ENCODE measurements at regions of chr5 and their contacts with region 1.

Region 1: GRCh38 chr5:1315709-1316587 is 21.1 kb upstream of the TERT start:
- DNase-seq: peak in 8 of 9 experiments; percentile 34 to 83 (median 70)
- ATAC-seq: peak; percentile 65
- H3K4me3 ChIP-seq: peak overlapping the region; percentile 40 to 54
- H3K4me3 Mint-ChIP-seq: peak overlapping the region; percentile 82
- H3K27ac ChIP-seq: peak overlapping the region; percentile 45
- H3K27ac Mint-ChIP-seq: peak overlapping the region; percentile 94
- H3K4me1 ChIP-seq: peaks cover 58% of the 10 kb centered on the region
- H3K4me1 Mint-ChIP-seq: peaks cover 61% of the 10 kb centered on the region
- H3K27me3 ChIP-seq: no peaks in the 10 kb centered on the region
- H3K27me3 Mint-ChIP-seq: no peaks in the 10 kb centered on the region
- CTCF ChIP-seq: no peak

Region 2: DNA sequence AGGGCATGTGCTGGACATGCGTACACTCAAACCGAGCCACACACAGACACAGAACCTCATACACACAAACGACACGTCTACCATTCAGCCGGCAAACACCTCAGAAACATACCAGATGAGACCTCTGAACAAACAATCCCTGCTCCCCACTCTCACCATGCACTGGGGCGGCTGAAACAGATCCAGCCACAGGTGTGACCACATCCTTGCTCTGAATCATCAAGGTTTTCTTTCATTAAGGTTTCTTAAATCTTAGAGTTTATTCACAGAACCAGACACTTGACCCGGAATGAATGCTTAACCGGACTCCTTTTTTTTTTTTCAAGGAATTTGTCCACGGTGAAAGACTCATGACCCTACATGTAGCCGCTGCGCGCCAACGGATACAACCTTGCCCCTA is 47.3 kb before region 1 on chr5:
- CTCF ChIA-PET with region 1: no interaction called
- POLR2A ChIA-PET with region 1: no interaction called
- intact Hi-C with region 1: loop called in 1 of 2 experiments (anchors 1 kb)
- DNase-seq: peak in 8 of 9 experiments; percentile 35 to 76 (median 58)
- ATAC-seq: peak; percentile 94
- H3K4me3 ChIP-seq: no peak overlapping the region
- H3K4me3 Mint-ChIP-seq: no peak overlapping the region
- H3K27ac ChIP-seq: no peak overlapping the region
- H3K27ac Mint-ChIP-seq: no peak overlapping the region
- H3K4me1 ChIP-seq: peaks cover 15% of the 10 kb centered on the region
- H3K4me1 Mint-ChIP-seq: peaks cover 14% of the 10 kb centered on the region
- H3K27me3 ChIP-seq: no peaks in the 10 kb centered on the region
- H3K27me3 Mint-ChIP-seq: no peaks in the 10 kb centered on the region
- CTCF ChIP-seq: no peak

Region 3: GRCh38 chr5:1294835-1295649 is 20.9 kb before region 1 on chr5 and contains the start of gene TERT:
- CTCF ChIA-PET with region 1: interaction called, 4 read pairs
- POLR2A ChIA-PET with region 1: interaction called, 3 read pairs
- intact Hi-C with region 1: loop called in 1 of 2 experiments (anchors 1 kb)
- DNase-seq: peak; percentile 41 to 71 (median 60)
- ATAC-seq: peak; percentile 87
- H3K4me3 ChIP-seq: peak within 1 kb of the TSS in 1 of 2 experiments; percentile 23
- H3K4me3 Mint-ChIP-seq: peak within 1 kb of the TSS; percentile 58
- H3K27ac ChIP-seq: no peak within 1 kb of the TSS
- H3K27ac Mint-ChIP-seq: no peak within 1 kb of the TSS
- H3K4me1 ChIP-seq: peaks cover 8% of the 10 kb centered on the region
- H3K4me1 Mint-ChIP-seq: peaks cover 4% of the 10 kb centered on the region
- H3K27me3 ChIP-seq: peaks cover 0 to 8% of the 10 kb centered on the region in 2 experiments
- H3K27me3 Mint-ChIP-seq: peaks cover 3% of the 10 kb centered on the region
- CTCF ChIP-seq: no peak
- total RNA-seq, gene TERT: 0.08 TPM in 1 of 2 experiments, not detected in the other

Region 4: GRCh38 chr5:1479581-1480188 is 163.7 kb after region 1 on chr5:
- CTCF ChIA-PET with region 1: no interaction called
- POLR2A ChIA-PET with region 1: no interaction called
- intact Hi-C with region 1: no loop called
- DNase-seq: peak; percentile 21 to 78 (median 63)
- ATAC-seq: peak; percentile 85
- H3K4me3 ChIP-seq: no peak overlapping the region
- H3K4me3 Mint-ChIP-seq: no peak overlapping the region
- H3K27ac ChIP-seq: no peak overlapping the region
- H3K27ac Mint-ChIP-seq: no peak overlapping the region
- H3K4me1 ChIP-seq: peaks cover 4% of the 10 kb centered on the region
- H3K4me1 Mint-ChIP-seq: peaks cover 8% of the 10 kb centered on the region
- H3K27me3 ChIP-seq: no peaks in the 10 kb centered on the region
- H3K27me3 Mint-ChIP-seq: no peaks in the 10 kb centered on the region
- CTCF ChIP-seq: peak; percentile 83

Region 5: GRCh38 chr5:2805080-2805479 is 1489.1 kb after region 1 on chr5:
- CTCF ChIA-PET with region 1: no interaction called
- POLR2A ChIA-PET with region 1: no interaction called
- intact Hi-C with region 1: no loop called
- DNase-seq: no peak
- ATAC-seq: no peak
- H3K4me3 ChIP-seq: no peak overlapping the region
- H3K4me3 Mint-ChIP-seq: no peak overlapping the region
- H3K27ac ChIP-seq: no peak overlapping the region
- H3K27ac Mint-ChIP-seq: no peak overlapping the region
- H3K4me1 ChIP-seq: no peaks in the 10 kb centered on the region
- H3K4me1 Mint-ChIP-seq: no peaks in the 10 kb centered on the region
- H3K27me3 ChIP-seq: no peaks in the 10 kb centered on the region
- H3K27me3 Mint-ChIP-seq: no peaks in the 10 kb centered on the region
- CTCF ChIP-seq: no peak